Ascending aorta (tissue), 2 donors: ENCODE measurements at regions of chr2 and their contacts with region 1.

Region 1: GRCh38 chr2:227766373-227766883 is 20.7 kb downstream of the SCYGR8 start:
- DNase-seq: peak in 1 of 2 donors; percentile 91
- H3K4me3 ChIP-seq: no peak overlapping the region
- H3K27ac ChIP-seq: peak overlapping the region; percentile 29 to 60
- H3K4me1 ChIP-seq: peaks cover 0 to 11% of the 10 kb centered on the region in 2 donors
- H3K27me3 ChIP-seq: no peaks in the 10 kb centered on the region
- CTCF ChIP-seq: peak; percentile 82 to 85 (median 85)

Region 2: DNA sequence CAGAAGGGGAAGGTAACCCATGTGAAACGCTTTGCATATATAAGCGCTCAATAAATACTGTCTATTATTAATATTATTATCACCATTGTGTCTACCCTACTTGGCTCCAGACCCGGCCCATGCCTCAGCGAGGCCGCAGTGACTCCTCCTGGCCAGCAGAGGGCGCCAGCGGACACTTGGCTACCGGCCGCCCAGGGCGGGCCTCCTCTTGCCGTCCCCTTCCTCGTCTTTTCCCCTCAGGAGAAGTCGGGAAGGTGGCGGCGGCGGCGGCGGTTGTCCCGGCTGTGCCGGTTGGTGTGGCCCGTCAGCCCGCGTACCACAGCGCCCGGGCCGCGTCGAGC is 294.5 kb before region 1 on chr2 and contains the start of gene AGFG1:
- intact Hi-C with region 1: loop called (anchors 2 kb)
- DNase-seq: peak; percentile 40 to 92
- H3K4me3 ChIP-seq: peak within 1 kb of the TSS; percentile 95 to 97
- H3K27ac ChIP-seq: peak within 1 kb of the TSS; percentile 92 to 97
- H3K4me1 ChIP-seq: peaks cover 0 to 22% of the 10 kb centered on the region in 2 donors
- H3K27me3 ChIP-seq: no peaks in the 10 kb centered on the region
- CTCF ChIP-seq: peak; percentile 96 to 99 (median 99)
- total RNA-seq, gene AGFG1: 25.5 TPM

Region 3: GRCh38 chr2:227608561-227609338 is 157.7 kb before region 1 on chr2:
- intact Hi-C with region 1: no loop called
- DNase-seq: no peak
- H3K4me3 ChIP-seq: no peak overlapping the region
- H3K27ac ChIP-seq: no peak overlapping the region
- H3K4me1 ChIP-seq: no peaks in the 10 kb centered on the region
- H3K27me3 ChIP-seq: no peaks in the 10 kb centered on the region
- CTCF ChIP-seq: no peak

Region 4: DNA sequence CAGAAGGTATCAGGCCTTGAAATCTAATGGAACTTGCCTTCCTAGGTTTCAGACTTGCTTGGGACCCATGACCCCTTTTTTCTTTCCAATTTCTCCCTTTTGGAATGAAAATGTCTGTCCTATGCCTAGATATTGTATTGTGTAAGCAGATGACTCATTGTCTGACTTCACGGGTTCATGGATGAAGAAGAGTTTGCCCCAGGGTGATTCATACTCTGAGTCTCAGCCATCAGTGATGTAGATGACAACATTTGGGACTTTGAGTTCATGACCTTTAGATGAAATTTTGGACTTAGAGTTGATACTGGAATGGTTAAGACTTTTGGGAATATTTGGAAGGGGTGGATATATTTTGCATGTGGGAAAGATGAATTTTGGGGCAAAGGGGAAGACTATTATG is 111.0 kb before region 1 on chr2:
- intact Hi-C with region 1: loop called (anchors 1 kb)
- DNase-seq: no peak
- H3K4me3 ChIP-seq: no peak overlapping the region
- H3K27ac ChIP-seq: no peak overlapping the region
- H3K4me1 ChIP-seq: peaks cover 0 to 3% of the 10 kb centered on the region in 2 donors
- H3K27me3 ChIP-seq: no peaks in the 10 kb centered on the region
- CTCF ChIP-seq: no peak

Region 5: GRCh38 chr2:227674331-227674882 is 92.0 kb before region 1 on chr2:
- intact Hi-C with region 1: no loop called
- DNase-seq: no peak
- H3K4me3 ChIP-seq: no peak overlapping the region
- H3K27ac ChIP-seq: no peak overlapping the region
- H3K4me1 ChIP-seq: no peaks in the 10 kb centered on the region
- H3K27me3 ChIP-seq: no peaks in the 10 kb centered on the region
- CTCF ChIP-seq: no peak

Region 6: GRCh38 chr2:227717687-227718567 is 48.5 kb before region 1 on chr2 and contains the start of gene SLC19A3:
- intact Hi-C with region 1: loop called (anchors 1 kb)
- DNase-seq: peak; percentile 44 to 95
- H3K4me3 ChIP-seq: peak within 1 kb of the TSS; percentile 54 to 60
- H3K27ac ChIP-seq: peak within 1 kb of the TSS; percentile 59 to 79
- H3K4me1 ChIP-seq: peaks cover 0 to 7% of the 10 kb centered on the region in 2 donors
- H3K27me3 ChIP-seq: no peaks in the 10 kb centered on the region
- CTCF ChIP-seq: no peak
- total RNA-seq, gene SLC19A3: 16.5 TPM

Region 7: GRCh38 chr2:227890495-227891079 is 124.2 kb after region 1 on chr2:
- intact Hi-C with region 1: loop called (anchors 5 kb)
- DNase-seq: no peak
- H3K4me3 ChIP-seq: no peak overlapping the region
- H3K27ac ChIP-seq: no peak overlapping the region
- H3K4me1 ChIP-seq: no peaks in the 10 kb centered on the region
- H3K27me3 ChIP-seq: no peaks in the 10 kb centered on the region
- CTCF ChIP-seq: peak; percentile 30 to 72 (median 47)

Region 8: GRCh38 chr2:227908261-227909054 is 142.0 kb after region 1 on chr2:
- intact Hi-C with region 1: no loop called
- DNase-seq: no peak
- H3K4me3 ChIP-seq: no peak overlapping the region
- H3K27ac ChIP-seq: no peak overlapping the region
- H3K4me1 ChIP-seq: no peaks in the 10 kb centered on the region
- H3K27me3 ChIP-seq: no peaks in the 10 kb centered on the region
- CTCF ChIP-seq: no peak